IMR-90 (cell line): ENCODE measurements at regions of chr3 and their contacts with region 1.

Region 1: GRCh38 chr3:134485718-134486576 is at the starts of genes ANAPC13 and CEP63:
- DNase-seq: peak; percentile 99
- ATAC-seq: peak; percentile 86
- H3K4me3 ChIP-seq: peak within 1 kb of the TSS; percentile 54
- H3K27ac ChIP-seq: peak within 1 kb of the TSS; percentile 93
- H3K4me1 ChIP-seq: peaks cover 20% of the 10 kb centered on the region
- H3K27me3 ChIP-seq: no peaks in the 10 kb centered on the region
- CTCF ChIP-seq: no peak
- POLR2A ChIP-seq: peak; percentile 82
- RAD21 ChIP-seq: 0 out of 2 replicates have a peak, but pooled peaks have one; percentile 5
- total RNA-seq, gene ANAPC13: 43.4 and 82.8 TPM in 2 replicates
- total RNA-seq, gene CEP63: 6.5 and 16.1 TPM in 2 replicates

Region 2: DNA sequence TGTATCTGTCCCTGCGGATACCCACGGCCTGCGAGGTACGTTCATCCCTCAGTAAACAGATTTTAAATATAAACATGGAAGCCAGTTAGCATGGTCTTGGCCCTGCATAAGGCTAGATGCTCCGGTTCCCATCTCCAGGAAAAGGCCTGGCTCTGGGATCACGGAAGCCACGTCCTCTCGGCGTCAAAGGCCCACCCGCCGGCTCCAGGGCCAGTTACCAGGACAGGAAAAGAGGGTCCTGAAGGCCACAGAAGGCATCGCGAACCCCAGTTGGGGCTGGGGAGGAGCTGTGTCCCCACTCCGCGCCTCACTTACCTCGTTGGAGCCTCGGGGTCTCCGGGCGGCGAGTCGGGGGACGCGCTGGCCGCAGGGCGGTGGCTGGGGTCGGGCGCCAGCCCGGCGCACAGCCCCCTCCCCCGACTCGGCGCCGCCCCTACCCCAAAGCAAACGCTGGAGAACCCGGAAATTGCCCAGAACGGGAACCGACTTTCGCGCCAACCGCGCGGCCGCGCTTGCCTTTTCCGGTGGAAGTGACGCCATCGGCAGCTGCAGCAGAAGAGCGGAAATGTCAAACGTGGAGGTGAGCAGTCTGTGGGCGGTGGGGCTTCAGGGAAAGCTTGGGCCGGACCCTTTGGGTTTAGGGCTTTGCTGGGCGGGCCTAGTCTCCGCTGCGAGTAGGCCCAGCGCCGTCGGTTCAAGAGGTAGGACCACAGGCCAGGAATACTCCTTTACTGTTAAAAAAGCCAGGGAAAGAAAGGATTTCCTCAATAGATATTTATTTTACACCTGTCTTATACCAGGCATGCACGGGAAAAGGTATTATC is 824.3 kb before region 1 on chr3 and contains the start of gene TOPBP1:
- CTCF ChIA-PET with region 1: no interaction called
- POLR2A ChIA-PET with region 1: no interaction called
- dilution Hi-C with region 1: no loop called
- in situ Hi-C with region 1: no loop called
- intact Hi-C with region 1: loop called (anchors 5 kb)
- DNase-seq: peak; percentile 70
- ATAC-seq: peak; percentile 78
- H3K4me3 ChIP-seq: peak within 1 kb of the TSS; percentile 91
- H3K27ac ChIP-seq: peak within 1 kb of the TSS; percentile 78
- H3K4me1 ChIP-seq: no peaks in the 10 kb centered on the region; the same call in none of the 2 replicates
- H3K27me3 ChIP-seq: no peaks in the 10 kb centered on the region
- CTCF ChIP-seq: no peak
- POLR2A ChIP-seq: peak; percentile 44; the same call in 1 of the 2 replicates
- RAD21 ChIP-seq: no peak
- total RNA-seq, gene TOPBP1: 50.0 and 50.5 TPM in 2 replicates

Region 3: DNA sequence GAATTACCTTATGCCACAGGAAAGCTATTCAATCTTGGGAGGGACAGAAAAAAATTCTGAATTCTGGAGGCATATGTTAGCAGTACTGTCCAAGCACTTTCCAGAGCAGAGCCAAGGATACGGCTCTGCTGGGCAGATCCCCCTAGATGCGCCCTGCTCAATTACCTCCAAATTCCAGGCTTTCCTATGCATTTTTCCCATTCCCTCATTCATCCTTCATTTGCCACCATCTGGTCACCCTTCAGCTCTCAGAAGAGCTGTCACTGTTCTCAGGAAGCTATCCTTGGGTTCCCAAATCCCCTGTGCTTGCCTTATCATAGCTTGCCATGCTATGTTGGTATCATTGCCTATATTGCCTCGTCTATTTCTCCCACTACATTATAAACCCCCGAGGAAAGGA is 280.5 kb before region 1 on chr3:
- CTCF ChIA-PET with region 1: no interaction called
- POLR2A ChIA-PET with region 1: no interaction called
- dilution Hi-C with region 1: no loop called
- in situ Hi-C with region 1: loop called (anchors 5 kb)
- intact Hi-C with region 1: loop called (anchors 5 kb)
- DNase-seq: no peak
- ATAC-seq: no peak
- H3K4me3 ChIP-seq: no peak overlapping the region
- H3K27ac ChIP-seq: no peak overlapping the region
- H3K4me1 ChIP-seq: peaks cover 10% of the 10 kb centered on the region
- H3K27me3 ChIP-seq: no peaks in the 10 kb centered on the region
- CTCF ChIP-seq: no peak
- POLR2A ChIP-seq: no peak
- RAD21 ChIP-seq: no peak

Region 4: DNA sequence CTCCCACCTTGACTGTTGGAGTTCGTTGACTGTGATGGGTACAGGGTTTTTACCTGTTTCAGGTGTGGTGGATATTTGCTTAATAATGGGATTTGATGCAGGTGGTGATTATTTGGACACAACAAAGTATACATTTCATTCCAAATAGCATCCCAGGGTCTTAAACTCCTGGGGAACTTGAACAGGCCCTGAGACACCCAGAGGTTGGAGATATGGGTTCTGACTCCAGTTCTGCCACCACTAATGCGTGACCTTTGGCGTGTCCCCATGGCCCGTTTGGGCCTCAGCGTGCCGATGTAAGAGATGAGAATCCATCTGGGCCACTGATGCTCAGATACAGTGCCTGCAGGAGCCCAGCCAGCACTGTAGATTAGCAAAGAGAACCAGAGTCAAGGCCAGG is 573.6 kb after region 1 on chr3:
- CTCF ChIA-PET with region 1: no interaction called
- POLR2A ChIA-PET with region 1: no interaction called
- dilution Hi-C with region 1: no loop called
- in situ Hi-C with region 1: no loop called
- intact Hi-C with region 1: no loop called
- DNase-seq: no peak
- ATAC-seq: no peak
- H3K4me3 ChIP-seq: no peak overlapping the region
- H3K27ac ChIP-seq: no peak overlapping the region
- H3K4me1 ChIP-seq: no peaks in the 10 kb centered on the region
- H3K27me3 ChIP-seq: no peaks in the 10 kb centered on the region
- CTCF ChIP-seq: no peak
- POLR2A ChIP-seq: no peak
- RAD21 ChIP-seq: no peak